B cell (primary cell): ENCODE measurements at regions of chr12 and their contacts with region 1.

Region 1: GRCh38 chr12:68001486-68002466 is 12.5 kb downstream of the IFNG-AS1 start:
- DNase-seq: peak; percentile 33
- ATAC-seq: no peak
- H3K4me3 ChIP-seq: no peak overlapping the region
- H3K4me3 Mint-ChIP-seq: no peak overlapping the region
- H3K27ac ChIP-seq: peak overlapping the region in 1 of 2 donors; percentile 23
- H3K27ac Mint-ChIP-seq: no peak overlapping the region
- H3K4me1 ChIP-seq: peaks cover 6% of the 10 kb centered on the region in 2 donors
- H3K4me1 Mint-ChIP-seq: peaks cover 7% of the 10 kb centered on the region
- H3K27me3 ChIP-seq: no peaks in the 10 kb centered on the region
- H3K27me3 Mint-ChIP-seq: no peaks in the 10 kb centered on the region
- CTCF ChIP-seq: peak; percentile 63

Region 2: GRCh38 chr12:67919406-67919805 is 82.4 kb before region 1 on chr12:
- CTCF ChIA-PET with region 1: no interaction called
- POLR2A ChIA-PET with region 1: no interaction called
- intact Hi-C with region 1: no loop called
- DNase-seq: no peak
- ATAC-seq: no peak
- H3K4me3 ChIP-seq: no peak overlapping the region
- H3K4me3 Mint-ChIP-seq: no peak overlapping the region
- H3K27ac ChIP-seq: no peak overlapping the region
- H3K27ac Mint-ChIP-seq: no peak overlapping the region
- H3K4me1 ChIP-seq: peaks cover 12 to 13% of the 10 kb centered on the region in 2 donors
- H3K4me1 Mint-ChIP-seq: peaks cover 14% of the 10 kb centered on the region
- H3K27me3 ChIP-seq: no peaks in the 10 kb centered on the region
- H3K27me3 Mint-ChIP-seq: peaks cover 10% of the 10 kb centered on the region
- CTCF ChIP-seq: no peak

Region 3: GRCh38 chr12:68012712-68013111 is 10.9 kb after region 1 on chr12:
- CTCF ChIA-PET with region 1: interaction called, 13 read pairs
- POLR2A ChIA-PET with region 1: no interaction called
- intact Hi-C with region 1: no loop called
- DNase-seq: peak; percentile 74
- ATAC-seq: peak; percentile 91
- H3K4me3 ChIP-seq: peak overlapping the region in 1 of 5 experiments; percentile 6
- H3K4me3 Mint-ChIP-seq: peak overlapping the region; percentile 54
- H3K27ac ChIP-seq: no peak overlapping the region
- H3K27ac Mint-ChIP-seq: peak overlapping the region; percentile 54
- H3K4me1 ChIP-seq: peaks cover 28% of the 10 kb centered on the region in 2 donors
- H3K4me1 Mint-ChIP-seq: peaks cover 45% of the 10 kb centered on the region
- H3K27me3 ChIP-seq: no peaks in the 10 kb centered on the region
- H3K27me3 Mint-ChIP-seq: no peaks in the 10 kb centered on the region
- CTCF ChIP-seq: no peak